WTC11 (cell line): ENCODE measurements at regions of chr9 and their contacts with region 1.

Region 1: GRCh38 chr9:137302176-137302994 is at the start of gene NRARP:
- DNase-seq: peak; percentile 84
- ATAC-seq: peak; percentile 31
- H3K4me3 Mint-ChIP-seq: peak within 1 kb of the TSS; percentile 94
- H3K27ac Mint-ChIP-seq: peak within 1 kb of the TSS; percentile 84
- H3K4me1 Mint-ChIP-seq: peaks cover 45% of the 10 kb centered on the region
- H3K27me3 Mint-ChIP-seq: peaks cover 20% of the 10 kb centered on the region
- CTCF ChIP-seq: peak; percentile 42; the same call in 1 of the 2 replicates
- total RNA-seq, gene NRARP: 46.7 to 52.4 TPM (median 51.5 TPM) in 3 replicates

Region 2: GRCh38 chr9:137316012-137316976 is 13.9 kb after region 1 on chr9:
- CTCF ChIA-PET with region 1: interaction called, 172 read pairs
- POLR2A ChIA-PET with region 1: interaction called, 10 read pairs
- DNase-seq: peak; percentile 63
- ATAC-seq: peak; percentile 62
- H3K4me3 Mint-ChIP-seq: 0 out of 2 replicates have a peak overlapping the region, but pooled peaks have one; percentile 20
- H3K27ac Mint-ChIP-seq: no peak overlapping the region
- H3K4me1 Mint-ChIP-seq: peaks cover 7% of the 10 kb centered on the region; the same call in 1 of the 2 replicates
- H3K27me3 Mint-ChIP-seq: no peaks in the 10 kb centered on the region
- CTCF ChIP-seq: no peak

Region 3: DNA sequence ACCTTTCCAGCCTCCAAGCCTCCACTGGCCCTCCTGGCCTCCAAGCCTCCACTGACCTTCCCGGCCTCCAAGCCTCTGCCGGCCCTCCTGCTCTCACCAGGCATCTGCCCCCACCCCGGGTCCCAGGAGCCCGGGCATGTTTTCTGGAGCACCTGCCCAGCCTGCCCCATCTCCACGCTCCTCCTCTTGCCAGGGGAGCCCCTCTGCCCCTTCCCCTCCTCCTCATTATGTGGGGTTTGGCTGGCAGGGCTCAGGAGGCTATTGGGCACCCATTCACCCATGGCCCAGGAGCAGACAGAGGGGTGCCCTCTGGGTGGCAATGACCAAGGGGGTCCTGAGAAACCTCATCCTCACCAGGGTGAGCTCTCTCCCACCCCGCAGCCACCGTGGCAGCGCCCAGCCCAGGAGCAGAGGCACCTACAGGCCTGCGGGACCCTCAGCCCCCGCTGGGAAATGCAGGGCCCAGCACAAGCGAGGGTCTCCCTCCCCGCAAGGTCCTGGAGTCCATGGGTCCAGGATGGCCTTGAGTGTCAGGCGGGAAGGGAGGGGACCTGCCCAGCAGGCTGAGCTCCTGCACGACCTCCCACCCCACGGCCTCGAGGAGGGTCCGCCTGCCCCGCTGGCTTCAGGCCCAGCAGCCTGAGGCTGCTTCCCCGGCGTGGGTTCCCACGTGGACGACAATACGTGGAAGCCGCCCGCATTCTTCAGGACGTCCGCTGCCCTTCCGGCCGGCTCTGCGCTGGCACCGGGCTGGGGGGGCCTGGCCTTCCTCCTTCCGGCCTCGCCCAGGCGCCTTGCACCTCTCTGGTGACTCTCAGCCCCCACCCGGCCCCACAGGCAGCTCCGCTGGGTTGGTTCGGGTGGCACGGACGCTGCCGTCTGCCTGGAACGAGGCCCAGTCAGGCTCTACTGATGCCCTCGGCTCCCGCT is 51.1 kb after region 1 on chr9:
- CTCF ChIA-PET with region 1: no interaction called
- POLR2A ChIA-PET with region 1: no interaction called
- DNase-seq: no peak
- ATAC-seq: no peak
- H3K4me3 Mint-ChIP-seq: no peak overlapping the region
- H3K27ac Mint-ChIP-seq: no peak overlapping the region
- H3K4me1 Mint-ChIP-seq: no peaks in the 10 kb centered on the region
- H3K27me3 Mint-ChIP-seq: peaks cover 12% of the 10 kb centered on the region
- CTCF ChIP-seq: no peak